Motor neuron (in vitro differentiated cells): ENCODE measurements at regions of chr5 and their contacts with region 1.

Region 1: GRCh38 chr5:82165740-82166530 is 112.2 kb downstream of the RPS23 start:
- ATAC-seq: peak; percentile 95 to 100 (median 99)
- H3K4me3 ChIP-seq: no peak overlapping the region
- H3K27ac ChIP-seq: peak overlapping the region in 1 of 2 donors; percentile 8
- H3K4me1 ChIP-seq: peaks cover 5 to 12% of the 10 kb centered on the region in 2 donors

Region 2: DNA sequence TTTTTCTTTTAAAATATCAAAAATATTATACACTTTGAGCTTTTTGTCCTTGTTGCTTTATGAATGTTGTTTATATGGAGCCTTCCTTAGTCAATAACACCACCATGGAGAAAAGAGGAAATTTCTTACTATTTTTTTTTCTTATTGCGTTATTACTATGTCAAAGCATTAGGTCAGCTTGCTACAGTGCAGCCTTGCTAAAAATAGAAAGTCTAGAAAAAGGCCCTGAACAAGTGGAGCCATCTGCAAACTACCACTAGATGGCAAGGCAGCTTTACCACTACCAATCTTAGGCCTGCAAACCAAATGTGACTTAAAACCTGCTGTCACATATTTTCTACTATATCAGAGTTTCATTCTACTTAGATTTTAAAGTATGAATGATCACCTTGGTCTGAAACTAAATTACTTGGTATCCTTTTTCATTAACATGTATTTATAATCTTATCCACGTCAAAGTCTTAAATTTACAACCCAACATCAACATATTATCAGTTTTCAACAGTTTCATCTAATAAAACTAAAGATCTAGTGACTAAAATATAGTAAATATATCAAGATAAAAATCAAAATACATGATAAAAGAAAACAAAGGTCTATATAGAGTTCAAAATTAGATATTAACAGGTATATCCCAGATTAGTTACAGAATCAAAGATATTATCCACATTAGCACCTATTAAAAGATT is 658.9 kb before region 1 on chr5:
- in situ Hi-C with region 1: loop called in 2 of 9 experiments (anchors 25 kb)
- ATAC-seq: peak; percentile 100
- H3K4me3 ChIP-seq: no peak overlapping the region
- H3K27ac ChIP-seq: no peak overlapping the region
- H3K4me1 ChIP-seq: peaks cover 2 to 5% of the 10 kb centered on the region in 2 donors

Region 3: GRCh38 chr5:81851481-81852178 is 314.3 kb before region 1 on chr5:
- in situ Hi-C with region 1: loop called in 1 of 9 experiments (anchors 25 kb)
- ATAC-seq: peak; percentile 77 to 95 (median 92)
- H3K4me3 ChIP-seq: peak overlapping the region; percentile 17 to 35 (median 26)
- H3K27ac ChIP-seq: peak overlapping the region; percentile 48 to 85
- H3K4me1 ChIP-seq: peaks cover 60 to 81% of the 10 kb centered on the region in 2 donors